SK-N-SH (cell line): ENCODE measurements at regions of chr11 and their contacts with region 1.

Region 1: GRCh38 chr11:69101115-69101791 is 52.5 kb downstream of the TPCN2 start:
- DNase-seq: peak; percentile 96
- H3K4me3 ChIP-seq: peak overlapping the region in 1 of 2 experiments; percentile 16; a peak in 1 of 4 replicates
- H3K27ac ChIP-seq: no peak overlapping the region; a peak in 1 of 4 replicates
- H3K4me1 ChIP-seq: peaks cover 10 to 27% of the 10 kb centered on the region in 2 experiments; a peak in 2 of 4 replicates
- H3K27me3 ChIP-seq: no peaks in the 10 kb centered on the region
- CTCF ChIP-seq: peak; percentile 98
- EP300 ChIP-seq: no peak
- RAD21 ChIP-seq: peak; percentile 99

Region 2: GRCh38 chr11:69075421-69076128 is 25.7 kb before region 1 on chr11:
- CTCF ChIA-PET with region 1: no interaction called
- POLR2A ChIA-PET with region 1: no interaction called
- DNase-seq: no peak
- H3K4me3 ChIP-seq: no peak overlapping the region
- H3K27ac ChIP-seq: peak overlapping the region in 1 of 2 experiments; percentile 33; a peak in 1 of 4 replicates
- H3K4me1 ChIP-seq: peaks cover 0 to 7% of the 10 kb centered on the region in 2 experiments; a peak in 2 of 4 replicates
- H3K27me3 ChIP-seq: no peaks in the 10 kb centered on the region
- CTCF ChIP-seq: no peak
- EP300 ChIP-seq: no peak
- RAD21 ChIP-seq: no peak

Region 3: DNA sequence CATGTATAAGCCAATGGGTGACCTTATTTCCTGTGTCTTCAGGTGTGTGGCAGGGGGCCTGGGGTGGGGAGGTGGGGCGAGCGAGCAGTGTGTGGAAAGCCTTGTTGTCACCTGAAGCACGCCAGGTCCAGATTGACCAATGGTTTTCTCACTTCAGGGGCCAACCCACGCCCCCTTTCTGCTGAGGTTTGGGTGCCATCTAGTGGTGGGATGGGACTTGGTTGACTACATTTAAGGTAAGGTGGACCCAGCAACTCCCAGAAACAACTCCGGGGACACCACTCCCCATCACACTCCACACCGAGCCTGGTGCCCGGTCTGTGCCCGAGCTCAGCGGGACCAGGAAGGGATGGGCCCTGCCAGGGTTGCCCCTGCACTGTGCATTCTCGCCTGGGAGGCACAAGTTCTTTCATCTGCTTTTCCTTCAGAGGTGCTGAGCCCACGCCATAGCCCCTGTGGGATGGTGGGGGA is 12.5 kb before region 1 on chr11:
- CTCF ChIA-PET with region 1: interaction called, 49 read pairs
- POLR2A ChIA-PET with region 1: no interaction called
- DNase-seq: peak; percentile 97
- H3K4me3 ChIP-seq: peak overlapping the region in 1 of 2 experiments; percentile 31; a peak in 1 of 4 replicates
- H3K27ac ChIP-seq: peak overlapping the region in 1 of 2 experiments; percentile 45; a peak in 1 of 4 replicates
- H3K4me1 ChIP-seq: peaks cover 4 to 7% of the 10 kb centered on the region in 2 experiments; a peak in 3 of 4 replicates
- H3K27me3 ChIP-seq: no peaks in the 10 kb centered on the region
- CTCF ChIP-seq: peak; percentile 79
- EP300 ChIP-seq: no peak
- RAD21 ChIP-seq: peak; percentile 92

Region 4: GRCh38 chr11:69157156-69157821 is 56.0 kb after region 1 on chr11:
- CTCF ChIA-PET with region 1: interaction called, 29 read pairs
- POLR2A ChIA-PET with region 1: interaction called, 7 read pairs
- DNase-seq: peak; percentile 97
- H3K4me3 ChIP-seq: no peak overlapping the region
- H3K27ac ChIP-seq: peak overlapping the region; percentile 47 to 98; a peak in 3 of 4 replicates
- H3K4me1 ChIP-seq: peaks cover 11 to 36% of the 10 kb centered on the region in 2 experiments; a peak in 2 of 4 replicates
- H3K27me3 ChIP-seq: no peaks in the 10 kb centered on the region
- CTCF ChIP-seq: no peak
- EP300 ChIP-seq: peak in 1 of 2 experiments; percentile 60; a peak in 1 of 4 replicates
- RAD21 ChIP-seq: 0 out of 2 replicates have a peak, but pooled peaks have one; percentile 7

Region 5: DNA sequence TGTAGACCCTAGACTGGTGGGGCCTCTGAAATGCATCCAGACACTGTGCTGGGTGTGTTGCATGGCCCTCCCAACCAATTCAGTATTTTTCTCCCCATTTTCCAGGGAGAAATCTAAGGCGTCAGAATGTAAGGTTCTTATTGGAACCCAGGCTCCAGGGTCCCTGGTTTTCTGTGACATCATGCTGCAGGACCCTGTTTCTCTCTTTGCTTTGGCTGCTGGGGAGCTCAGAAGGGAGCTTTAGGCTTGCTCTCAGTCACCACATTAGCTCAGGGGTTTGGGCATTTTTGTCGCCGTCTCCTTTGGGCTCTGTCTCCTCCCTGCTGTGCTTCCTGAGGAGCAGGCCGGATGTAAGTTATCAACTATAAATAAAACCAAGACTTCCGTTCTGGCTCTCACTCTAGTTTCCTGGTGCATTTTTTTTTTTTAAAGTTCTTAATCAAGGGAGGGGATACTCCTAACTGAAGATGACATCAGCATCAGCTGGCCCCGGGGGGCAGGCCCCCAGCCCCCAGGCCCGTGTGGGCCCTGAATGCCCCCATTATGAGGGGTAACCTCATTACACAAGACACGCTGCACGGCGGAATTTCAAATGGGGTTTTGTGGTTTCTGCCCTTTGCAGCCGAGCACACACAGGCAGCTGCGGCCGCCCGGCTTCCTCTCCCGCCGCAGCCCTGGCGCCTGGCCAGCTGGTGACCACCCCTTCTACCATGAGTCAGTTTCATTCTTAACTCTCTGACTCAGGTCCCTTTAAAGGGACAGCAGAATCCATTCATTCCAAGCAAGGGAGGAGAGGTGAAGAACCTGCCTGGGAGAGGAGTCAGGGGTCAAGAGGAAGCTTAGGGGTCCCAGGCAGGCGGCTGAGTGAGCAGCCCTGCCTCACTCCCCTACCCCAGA is 195.9 kb after region 1 on chr11:
- CTCF ChIA-PET with region 1: interaction called, 13 read pairs
- POLR2A ChIA-PET with region 1: no interaction called
- DNase-seq: peak; percentile 89
- H3K4me3 ChIP-seq: peak overlapping the region; percentile 4 to 9; a peak in 2 of 4 replicates
- H3K27ac ChIP-seq: peak overlapping the region; percentile 84 to 95
- H3K4me1 ChIP-seq: peaks cover 21 to 56% of the 10 kb centered on the region in 2 experiments; a peak in 3 of 4 replicates
- H3K27me3 ChIP-seq: no peaks in the 10 kb centered on the region
- CTCF ChIP-seq: no peak
- EP300 ChIP-seq: peak; percentile 31 to 98
- RAD21 ChIP-seq: no peak

Region 6: DNA sequence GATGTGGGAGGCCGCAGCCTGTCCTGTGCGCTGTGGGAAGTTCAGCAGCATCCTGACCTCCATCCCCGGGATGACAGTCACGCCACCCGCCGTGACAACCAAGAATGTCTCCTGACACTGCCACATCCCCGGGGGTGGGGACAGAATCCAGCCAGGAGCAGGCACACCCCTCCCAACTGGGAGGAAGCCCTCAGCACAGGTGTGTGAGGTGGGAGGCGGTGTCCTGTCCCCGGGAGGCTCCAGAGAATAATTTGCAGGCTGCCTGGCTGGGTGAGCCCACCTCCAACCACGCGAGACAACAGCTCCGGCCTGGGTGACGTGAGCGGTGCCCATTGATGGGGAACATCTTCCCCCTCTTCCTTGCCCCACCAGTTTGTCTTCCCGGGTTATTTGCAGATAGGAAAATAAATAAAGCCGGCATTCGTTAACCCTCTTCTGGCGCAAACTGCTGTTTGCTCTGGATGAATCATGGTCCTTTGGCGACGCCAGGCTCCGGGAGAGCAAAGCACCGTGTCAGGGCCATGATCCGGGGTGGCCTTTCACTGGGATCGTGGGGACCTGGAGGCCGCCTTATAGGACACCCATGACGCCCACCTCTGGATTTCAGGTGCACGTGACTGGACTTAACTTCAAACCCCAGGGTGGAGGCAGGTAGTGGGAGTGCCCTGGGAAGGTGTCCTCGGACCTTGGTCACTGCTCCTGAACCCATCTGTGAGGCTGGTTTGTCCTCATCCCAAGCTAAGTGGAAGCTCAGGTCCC is 553.5 kb after region 1 on chr11:
- CTCF ChIA-PET with region 1: interaction called, 84 read pairs
- POLR2A ChIA-PET with region 1: interaction called, 5 read pairs
- DNase-seq: peak; percentile 59
- H3K4me3 ChIP-seq: no peak overlapping the region
- H3K27ac ChIP-seq: peak overlapping the region in 1 of 2 experiments; percentile 22; a peak in 3 of 4 replicates
- H3K4me1 ChIP-seq: peaks cover 8 to 27% of the 10 kb centered on the region in 2 experiments; a peak in 2 of 4 replicates
- H3K27me3 ChIP-seq: no peaks in the 10 kb centered on the region
- CTCF ChIP-seq: no peak
- EP300 ChIP-seq: no peak
- RAD21 ChIP-seq: no peak

Region 7: GRCh38 chr11:69683764-69684333 is 582.6 kb after region 1 on chr11:
- CTCF ChIA-PET with region 1: interaction called, 10 read pairs
- POLR2A ChIA-PET with region 1: no interaction called
- DNase-seq: no peak
- H3K4me3 ChIP-seq: no peak overlapping the region
- H3K27ac ChIP-seq: no peak overlapping the region
- H3K4me1 ChIP-seq: no peaks in the 10 kb centered on the region; a peak in 1 of 4 replicates
- H3K27me3 ChIP-seq: no peaks in the 10 kb centered on the region
- CTCF ChIP-seq: peak; percentile 47
- EP300 ChIP-seq: no peak
- RAD21 ChIP-seq: peak; percentile 59